OCI-LY7 (cell line): ENCODE measurements at regions of chr5 and their contacts with region 1.

Region 1: DNA sequence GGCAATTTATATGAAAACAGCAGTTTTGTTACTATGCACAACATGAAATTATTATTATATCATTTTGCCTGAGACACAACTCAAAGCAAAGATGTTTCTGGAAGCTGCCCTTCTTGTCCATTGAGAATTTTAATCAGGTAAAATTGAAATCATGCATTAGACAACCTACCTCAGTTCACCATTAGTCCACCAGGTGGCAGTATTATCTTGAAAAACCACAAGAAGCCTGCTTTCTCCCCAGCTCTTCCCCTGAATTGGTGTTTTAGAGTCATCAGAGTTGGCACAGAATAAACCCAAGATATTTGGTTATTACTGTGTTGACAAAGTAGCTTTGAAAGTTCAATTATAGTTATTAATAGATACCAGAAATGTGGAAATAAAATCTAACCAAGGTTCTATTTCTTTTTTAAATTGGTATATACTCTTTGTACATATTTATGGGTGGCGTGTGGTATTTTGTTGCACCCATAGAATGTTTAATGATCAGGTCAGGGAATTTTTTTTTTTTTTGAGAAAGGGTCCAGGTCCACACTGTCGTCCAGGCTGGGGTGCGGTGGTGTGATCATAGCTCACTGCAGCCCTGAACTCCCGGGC is 25.7 kb downstream of the UTP15 start:
- DNase-seq: peak; percentile 77
- H3K4me3 ChIP-seq: no peak overlapping the region
- H3K27ac ChIP-seq: no peak overlapping the region
- H3K4me1 ChIP-seq: no peaks in the 10 kb centered on the region
- CTCF ChIP-seq: peak; percentile 94

Region 2: GRCh38 chr5:73792687-73793320 is 201.6 kb after region 1 on chr5:
- CTCF ChIA-PET with region 1: interaction called, 7 read pairs
- POLR2A ChIA-PET with region 1: no interaction called
- intact Hi-C with region 1: loop called (anchors 1 kb)
- DNase-seq: peak; percentile 60
- H3K4me3 ChIP-seq: no peak overlapping the region
- H3K27ac ChIP-seq: no peak overlapping the region
- H3K4me1 ChIP-seq: no peaks in the 10 kb centered on the region
- CTCF ChIP-seq: peak; percentile 97